Gastrocnemius medialis (tissue), 4 donors: ENCODE measurements at regions of chr13 and their contacts with region 1.

Region 1: GRCh38 chr13:75687150-75687763 is 51.1 kb downstream of the LMO7 start:
- DNase-seq: no peak
- ATAC-seq: peak in 1 of 2 donors; percentile 23
- H3K4me3 ChIP-seq: no peak overlapping the region
- H3K27ac ChIP-seq: no peak overlapping the region
- H3K4me1 ChIP-seq: no peaks in the 10 kb centered on the region
- H3K27me3 ChIP-seq: no peaks in the 10 kb centered on the region
- CTCF ChIP-seq: peak in 3 of 5 experiments; percentile 15 to 46 (median 34)
- POLR2A ChIP-seq: no peak

Region 2: DNA sequence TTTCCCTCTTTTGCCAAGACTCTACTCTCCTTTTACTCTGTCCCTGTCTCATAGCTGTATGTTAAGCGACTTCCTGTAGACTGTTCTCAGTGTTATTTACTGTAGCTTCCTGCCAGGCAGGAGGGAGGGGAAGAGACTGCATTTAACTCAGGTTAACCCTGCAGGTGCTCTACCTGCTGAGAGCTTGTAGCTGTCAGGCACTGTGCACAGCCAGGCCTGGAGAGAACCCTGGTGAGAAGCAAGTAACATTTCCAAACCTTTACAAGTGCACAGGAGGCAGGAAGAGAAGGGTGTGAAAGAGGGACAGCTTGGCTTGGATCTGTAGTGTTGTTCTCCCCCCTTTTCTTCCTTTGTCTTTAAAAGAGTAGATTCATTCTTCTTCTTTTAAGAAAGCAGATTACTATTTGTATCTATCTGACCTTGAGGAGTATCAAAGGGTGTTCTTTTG is 115.9 kb after region 1 on chr13:
- in situ Hi-C with region 1: loop called in 1 of 4 experiments (anchors 10 kb)
- intact Hi-C with region 1: no loop called
- DNase-seq: no peak
- ATAC-seq: peak in 1 of 2 donors; percentile 19
- H3K4me3 ChIP-seq: no peak overlapping the region
- H3K27ac ChIP-seq: peak overlapping the region; percentile 37 to 59 (median 42)
- H3K4me1 ChIP-seq: peaks cover 17 to 24% of the 10 kb centered on the region in 2 donors
- H3K27me3 ChIP-seq: no peaks in the 10 kb centered on the region
- CTCF ChIP-seq: no peak
- POLR2A ChIP-seq: no peak